ENCODE measurements at regions of chr14 and their contacts with region 1.

Region 1: DNA sequence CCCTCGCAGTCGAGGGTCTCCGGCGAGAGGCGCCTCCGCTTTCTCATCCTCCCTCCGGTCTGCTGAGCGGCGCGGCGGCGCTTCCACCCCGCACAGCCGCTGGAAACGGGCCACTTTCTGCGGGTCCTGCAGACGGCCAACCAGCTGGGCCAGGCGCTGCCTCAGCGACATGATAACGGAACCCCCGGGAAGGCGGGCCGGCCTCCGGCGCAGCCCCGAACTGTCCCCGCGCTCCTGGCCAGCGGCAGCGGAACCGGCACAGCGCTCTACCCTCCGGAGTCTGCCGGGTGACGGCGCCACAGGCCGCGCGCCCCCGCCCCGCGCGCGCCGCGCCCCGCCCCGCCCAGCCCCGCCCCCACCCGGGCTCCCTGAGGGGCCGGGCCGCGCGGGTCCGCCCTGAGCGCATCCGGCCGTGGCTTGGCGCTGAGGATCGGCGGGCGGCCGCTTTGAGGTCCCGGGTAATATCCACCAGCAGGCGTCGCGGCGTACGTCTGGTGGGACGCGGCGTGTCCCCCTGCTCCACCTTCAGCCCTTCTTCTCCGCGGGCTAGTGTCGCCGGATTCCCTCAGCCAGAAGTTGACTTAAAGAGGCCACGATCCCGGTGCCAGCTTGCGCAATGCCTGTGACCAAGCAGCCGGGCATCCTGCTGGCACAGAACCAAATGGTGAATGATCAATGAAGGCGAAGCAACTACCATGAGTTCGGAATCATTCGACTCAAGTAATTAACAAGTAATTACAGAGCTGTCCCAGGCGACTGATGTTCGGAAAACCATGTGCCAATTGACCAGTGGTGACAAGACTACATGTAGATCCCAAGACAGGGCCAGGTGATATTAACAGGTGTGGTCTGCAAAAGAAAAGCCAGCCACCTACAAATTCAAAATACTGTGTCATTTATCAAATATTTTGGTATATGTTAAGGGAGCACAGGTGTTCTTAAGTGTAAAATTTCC is at the start of gene SGPP1:
- DNase-seq: peak; percentile 74 to 91 (median 81)
- ATAC-seq: peak; percentile 88 to 89
- H3K4me3 Mint-ChIP-seq: peak within 1 kb of the TSS; percentile 96 to 99 (median 99)
- H3K27ac Mint-ChIP-seq: peak within 1 kb of the TSS; percentile 95 to 98 (median 97)
- H3K4me1 Mint-ChIP-seq: peaks cover 25 to 44% (median 43%) of the 10 kb centered on the region in 4 donors
- H3K27me3 Mint-ChIP-seq: no peaks in the 10 kb centered on the region
- polyA plus RNA-seq, gene SGPP1: 9.2 to 14.5 (median 11.3) TPM

Region 2: GRCh38 chr14:63632932-63633514 is 95.0 kb before region 1 on chr14:
- POLR2A ChIA-PET with region 1: interaction called, 16 read pairs
- DNase-seq: peak in 3 of 10 donors; percentile 53 to 64 (median 58)
- ATAC-seq: peak; percentile 89 to 91
- H3K4me3 Mint-ChIP-seq: no peak overlapping the region
- H3K27ac Mint-ChIP-seq: peak overlapping the region in 2 of 10 donors; percentile 6 to 68
- H3K4me1 Mint-ChIP-seq: peaks cover 21 to 67% (median 49%) of the 10 kb centered on the region in 4 donors
- H3K27me3 Mint-ChIP-seq: no peaks in the 10 kb centered on the region

Region 3: GRCh38 chr14:63641473-63642228 is 86.4 kb before region 1 on chr14 and contains the start of gene WDR89:
- POLR2A ChIA-PET with region 1: interaction called, 94 read pairs
- DNase-seq: peak in 9 of 10 donors; percentile 81 to 98 (median 97)
- ATAC-seq: peak; percentile 86
- H3K4me3 Mint-ChIP-seq: peak within 1 kb of the TSS; percentile 82 to 99 (median 94)
- H3K27ac Mint-ChIP-seq: peak within 1 kb of the TSS; percentile 93 to 98 (median 96)
- H3K4me1 Mint-ChIP-seq: peaks cover 16 to 65% (median 45%) of the 10 kb centered on the region in 4 donors
- H3K27me3 Mint-ChIP-seq: peaks cover 0 to 2% (median 0%) of the 10 kb centered on the region in 5 donors
- polyA plus RNA-seq, gene WDR89: 18.7 to 21.6 (median 20.5) TPM

Region 4: DNA sequence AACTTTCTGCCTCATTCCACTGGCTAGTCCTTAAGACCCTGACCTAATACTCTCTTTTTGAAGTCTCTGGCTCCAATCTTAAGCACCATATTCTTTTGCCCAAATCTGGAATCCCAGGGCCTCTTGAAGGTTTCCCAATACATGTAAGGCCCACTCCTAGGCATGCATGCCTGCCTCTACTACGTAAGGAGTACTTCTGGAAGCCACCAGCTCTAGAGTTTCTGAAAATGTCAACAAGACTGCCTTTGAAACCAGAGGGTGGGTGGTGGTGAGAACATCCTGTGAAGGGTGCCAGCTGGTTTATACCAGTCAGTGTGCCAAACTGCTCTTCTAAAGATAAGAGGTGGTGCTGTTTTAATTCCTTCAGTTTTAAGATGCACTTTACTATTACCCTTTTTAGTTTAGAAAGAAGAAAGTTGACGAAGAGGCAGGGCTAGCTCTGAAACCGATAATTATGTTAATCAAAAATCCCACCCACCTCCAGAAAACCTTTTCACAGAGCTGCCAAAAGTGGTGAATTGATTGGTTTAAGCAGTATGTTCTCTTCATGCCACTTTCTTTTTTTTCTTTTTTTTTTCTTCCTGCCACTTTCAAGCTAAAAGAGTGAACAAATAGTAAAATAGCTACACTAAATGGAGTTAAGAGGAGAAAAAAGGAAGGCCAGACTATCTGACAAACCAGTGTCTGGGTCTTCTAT is 77.6 kb before region 1 on chr14:
- POLR2A ChIA-PET with region 1: interaction called, 77 read pairs
- DNase-seq: peak; percentile 26 to 90 (median 73)
- ATAC-seq: peak; percentile 97
- H3K4me3 Mint-ChIP-seq: peak overlapping the region; percentile 61 to 88 (median 82)
- H3K27ac Mint-ChIP-seq: peak overlapping the region; percentile 99 to 100 (median 99)
- H3K4me1 Mint-ChIP-seq: peaks cover 20 to 63% (median 40%) of the 10 kb centered on the region in 4 donors
- H3K27me3 Mint-ChIP-seq: no peaks in the 10 kb centered on the region

Region 5: GRCh38 chr14:63663430-63664341 is 64.4 kb before region 1 on chr14:
- POLR2A ChIA-PET with region 1: no interaction called
- DNase-seq: no peak
- ATAC-seq: no peak
- H3K4me3 Mint-ChIP-seq: no peak overlapping the region
- H3K27ac Mint-ChIP-seq: no peak overlapping the region
- H3K4me1 Mint-ChIP-seq: peaks cover 0 to 5% (median under 1%) of the 10 kb centered on the region in 4 donors
- H3K27me3 Mint-ChIP-seq: no peaks in the 10 kb centered on the region

Region 6: GRCh38 chr14:63677821-63678380 is 50.1 kb before region 1 on chr14:
- POLR2A ChIA-PET with region 1: no interaction called
- DNase-seq: no peak
- ATAC-seq: no peak
- H3K4me3 Mint-ChIP-seq: no peak overlapping the region
- H3K27ac Mint-ChIP-seq: peak overlapping the region in 1 of 10 donors; percentile 68
- H3K4me1 Mint-ChIP-seq: peaks cover 0 to 2% (median 1%) of the 10 kb centered on the region in 4 donors
- H3K27me3 Mint-ChIP-seq: no peaks in the 10 kb centered on the region

Region 7: GRCh38 chr14:63752513-63753169 is 24.6 kb after region 1 on chr14:
- POLR2A ChIA-PET with region 1: no interaction called
- DNase-seq: no peak
- ATAC-seq: no peak
- H3K4me3 Mint-ChIP-seq: no peak overlapping the region
- H3K27ac Mint-ChIP-seq: peak overlapping the region in 1 of 10 donors; percentile 38
- H3K4me1 Mint-ChIP-seq: peaks cover 0 to 5% (median 0%) of the 10 kb centered on the region in 4 donors
- H3K27me3 Mint-ChIP-seq: no peaks in the 10 kb centered on the region